ENCODE measurements at regions of chr7 and their contacts with region 1.

Region 1: GRCh38 chr7:140494867-140495266 is 15.6 kb upstream of the MKRN1 start:
- DNase-seq: no peak
- H3K4me3 Mint-ChIP-seq: no peak overlapping the region
- H3K27ac Mint-ChIP-seq: no peak overlapping the region
- H3K4me1 Mint-ChIP-seq: no peaks in the 10 kb centered on the region
- H3K27me3 Mint-ChIP-seq: no peaks in the 10 kb centered on the region

Region 2: DNA sequence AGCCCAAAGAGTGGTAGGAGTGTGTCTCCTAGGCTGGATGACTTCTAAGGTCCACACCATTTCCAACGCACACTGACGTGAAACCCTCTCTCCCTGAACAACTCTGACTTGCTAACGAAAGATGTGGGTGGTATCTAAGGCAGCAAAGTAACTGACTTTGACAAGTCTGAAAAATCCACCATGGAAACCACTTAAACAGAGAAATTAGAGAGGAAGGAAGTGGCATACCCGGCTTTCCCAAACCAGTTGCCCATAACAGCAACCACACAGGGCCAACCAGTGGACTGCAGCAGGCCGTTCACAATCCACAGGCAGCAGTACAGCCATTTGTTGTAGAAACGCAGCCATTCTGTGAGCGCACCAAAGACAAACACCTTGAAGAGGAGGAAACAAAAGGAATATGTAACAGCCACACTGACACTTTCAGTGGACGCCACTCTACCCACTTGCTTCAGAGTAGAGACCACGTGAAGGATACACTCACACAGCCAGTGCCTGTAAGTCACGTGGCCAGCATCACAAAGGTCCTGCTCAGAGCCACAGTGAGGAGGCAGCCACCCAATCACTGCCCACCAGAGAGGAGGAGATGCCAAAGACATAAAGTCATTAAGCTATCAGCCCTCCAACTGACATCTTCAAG is 136.3 kb before region 1 on chr7:
- CTCF ChIA-PET with region 1: no interaction called
- intact Hi-C with region 1: loop called (anchors 2 kb)
- DNase-seq: no peak
- H3K4me3 Mint-ChIP-seq: peak overlapping the region; percentile 38
- H3K27ac Mint-ChIP-seq: peak overlapping the region; percentile 4
- H3K4me1 Mint-ChIP-seq: peaks cover 26% of the 10 kb centered on the region
- H3K27me3 Mint-ChIP-seq: no peaks in the 10 kb centered on the region